A673 (cell line): ENCODE measurements at regions of chr7 and their contacts with region 1.

Region 1: DNA sequence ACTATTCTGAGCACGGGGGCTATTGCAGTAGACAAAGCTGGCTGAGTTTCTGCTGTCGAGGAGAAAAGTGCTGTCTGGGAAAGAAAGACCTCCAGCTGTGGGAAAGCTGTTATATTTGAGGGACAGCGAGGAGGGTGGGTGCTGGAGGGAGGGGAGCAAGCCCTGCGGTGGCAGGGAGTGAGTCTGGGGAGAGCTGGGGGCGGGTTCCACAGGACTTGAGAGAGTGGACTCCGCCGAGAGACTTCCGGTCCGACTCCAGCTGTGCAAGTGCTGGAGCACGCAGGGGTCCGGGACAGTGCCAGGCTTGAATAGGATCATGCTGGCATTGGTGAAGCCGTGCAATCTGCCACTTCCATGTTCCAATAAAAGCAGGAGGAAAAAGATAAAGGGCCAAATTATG is 602.1 kb upstream of the FOXK1 start:
- DNase-seq: peak; percentile 88
- H3K4me3 ChIP-seq: no peak overlapping the region
- H3K27ac ChIP-seq: no peak overlapping the region
- H3K4me1 ChIP-seq: peaks cover 7% of the 10 kb centered on the region
- H3K27me3 ChIP-seq: no peaks in the 10 kb centered on the region
- CTCF ChIP-seq: no peak

Region 2: DNA sequence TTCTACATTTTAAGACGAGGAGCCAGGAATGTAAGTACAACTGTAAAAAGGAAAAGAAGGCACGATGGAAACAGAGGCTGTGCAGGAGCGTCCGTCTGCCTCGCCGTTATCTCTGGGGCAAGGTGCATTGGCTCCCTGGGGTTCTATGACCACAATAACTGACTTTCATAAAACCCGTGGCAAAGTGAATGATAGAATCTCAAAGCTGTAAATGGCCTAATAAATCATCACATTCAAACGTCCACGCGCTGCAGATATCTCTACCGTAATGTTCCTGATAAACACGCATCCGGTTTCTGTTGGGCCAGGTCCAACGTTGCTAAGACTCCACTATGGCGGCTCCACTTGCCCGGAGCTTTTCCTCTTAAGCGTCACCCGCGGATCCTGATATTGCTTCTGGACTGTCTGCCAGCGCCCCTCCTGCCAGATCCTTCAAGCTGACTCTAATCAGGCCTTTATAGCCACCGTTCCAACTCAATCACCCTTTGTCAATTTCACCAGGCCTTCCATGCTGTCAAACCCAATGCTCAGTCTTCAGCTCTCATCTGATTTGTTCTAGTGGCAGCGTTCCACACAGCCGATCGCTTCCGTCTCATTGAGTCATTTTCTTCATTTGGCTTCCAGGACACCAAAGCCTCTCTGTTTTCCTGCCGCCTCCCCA is 336.5 kb after region 1 on chr7:
- CTCF ChIA-PET with region 1: interaction called, 13 read pairs
- POLR2A ChIA-PET with region 1: no interaction called
- intact Hi-C with region 1: no loop called
- DNase-seq: peak; percentile 7
- H3K4me3 ChIP-seq: peak overlapping the region; percentile 15
- H3K27ac ChIP-seq: no peak overlapping the region
- H3K4me1 ChIP-seq: no peaks in the 10 kb centered on the region
- H3K27me3 ChIP-seq: no peaks in the 10 kb centered on the region
- CTCF ChIP-seq: no peak

Region 3: DNA sequence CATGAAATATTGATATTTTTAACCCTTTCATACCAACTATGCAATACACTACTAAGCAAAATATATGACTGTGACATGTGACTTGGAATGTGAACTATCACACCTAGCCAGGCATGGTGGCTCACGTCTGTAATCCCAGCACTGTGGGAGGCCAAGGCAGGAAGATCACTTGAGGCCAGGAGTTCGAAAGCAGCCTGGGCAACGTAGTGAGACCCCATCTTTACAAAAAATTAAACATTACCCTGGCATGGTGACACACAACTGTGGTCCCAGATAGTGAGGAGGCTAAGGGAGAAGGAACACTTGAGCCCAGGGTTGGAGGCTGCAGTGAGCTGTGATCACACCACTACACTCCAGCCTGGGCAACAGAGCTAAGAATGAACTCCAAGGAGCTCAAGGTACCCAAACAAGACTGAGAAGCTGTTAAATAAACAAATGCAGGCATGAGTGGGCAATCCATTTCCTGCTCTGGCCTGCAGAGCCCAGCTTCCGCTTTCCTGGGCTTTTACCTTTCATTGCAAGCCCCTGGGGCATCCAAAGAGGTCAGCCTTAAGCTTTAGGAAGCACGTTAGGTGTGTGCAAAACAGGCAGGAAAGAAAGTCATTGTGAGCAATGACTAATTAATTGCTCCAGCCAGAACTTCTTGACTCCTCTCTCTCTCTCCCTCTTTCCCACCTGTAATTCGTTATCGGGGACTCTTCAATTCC is 440.0 kb after region 1 on chr7:
- CTCF ChIA-PET with region 1: no interaction called
- POLR2A ChIA-PET with region 1: no interaction called
- intact Hi-C with region 1: loop called (anchors 10 kb)
- DNase-seq: no peak
- H3K4me3 ChIP-seq: no peak overlapping the region
- H3K27ac ChIP-seq: no peak overlapping the region
- H3K4me1 ChIP-seq: no peaks in the 10 kb centered on the region
- H3K27me3 ChIP-seq: peaks cover 54% of the 10 kb centered on the region
- CTCF ChIP-seq: no peak